ENCODE measurements at regions of chr19 and their contacts with region 1.

Region 1: GRCh38 chr19:23758187-23759074 is at the start of gene ZNF681:
- DNase-seq: peak; percentile 86 to 95 (median 90)
- H3K4me3 ChIP-seq: peak within 1 kb of the TSS; percentile 80 to 98
- H3K4me3 Mint-ChIP-seq: peak within 1 kb of the TSS; percentile 94 to 98 (median 96)
- H3K27ac ChIP-seq: peak within 1 kb of the TSS; percentile 93
- H3K27ac Mint-ChIP-seq: peak within 1 kb of the TSS; percentile 95 to 99 (median 98)
- H3K4me1 ChIP-seq: peaks cover 17% of the 10 kb centered on the region
- H3K4me1 Mint-ChIP-seq: peaks cover 17 to 47% (median 28%) of the 10 kb centered on the region in 4 donors
- H3K27me3 ChIP-seq: no peaks in the 10 kb centered on the region
- H3K27me3 Mint-ChIP-seq: no peaks in the 10 kb centered on the region
- total RNA-seq, gene ZNF681: 8.0 to 8.3 TPM

Region 2: DNA sequence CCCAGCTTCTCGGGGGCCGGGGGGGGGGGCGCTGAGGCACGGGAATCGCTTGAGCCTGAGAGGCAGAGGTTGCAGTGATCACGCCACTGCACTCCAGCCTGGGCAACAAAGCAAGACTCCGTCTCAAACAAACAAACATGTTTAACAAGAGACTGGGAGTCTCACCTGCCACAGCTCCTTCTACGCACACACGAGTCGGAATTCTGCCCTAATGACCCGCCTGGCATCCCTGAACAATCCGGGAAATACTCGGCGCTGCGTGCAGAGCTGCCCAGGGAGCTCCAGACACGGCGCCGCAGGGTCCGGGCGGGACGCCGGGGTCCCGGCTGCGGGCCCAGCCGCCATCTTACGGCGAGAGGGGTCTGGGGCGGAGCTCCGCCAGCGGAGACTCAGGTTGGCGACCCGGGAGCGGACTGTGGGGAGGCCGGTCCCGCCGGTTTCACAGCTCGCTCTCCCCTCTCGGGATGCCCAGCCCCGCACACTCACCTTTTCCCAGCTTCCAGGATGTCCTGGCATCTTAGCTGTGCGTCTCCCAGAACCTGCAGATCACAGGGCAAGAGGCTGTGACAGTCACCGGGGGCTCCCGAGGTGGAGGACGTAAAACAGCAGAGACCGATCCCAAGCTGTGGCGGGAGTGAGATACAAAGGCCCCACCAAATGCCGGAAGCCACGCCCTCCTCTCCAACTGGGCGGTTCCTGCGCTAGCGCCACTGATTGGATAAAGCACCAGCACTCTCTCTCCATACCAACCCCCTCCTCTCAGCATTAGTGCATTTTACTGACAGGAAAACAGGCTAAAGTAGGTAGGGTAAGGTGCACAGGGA is 484.6 kb before region 1 on chr19:
- CTCF ChIA-PET with region 1: no interaction called
- POLR2A ChIA-PET with region 1: interaction called, 16 read pairs
- intact Hi-C with region 1: loop called (anchors 1 kb)
- DNase-seq: peak; percentile 89 to 94 (median 90)
- H3K4me3 ChIP-seq: peak overlapping the region; percentile 94 to 99
- H3K4me3 Mint-ChIP-seq: peak overlapping the region; percentile 96 to 99 (median 98)
- H3K27ac ChIP-seq: peak overlapping the region; percentile 92
- H3K27ac Mint-ChIP-seq: peak overlapping the region; percentile 93 to 97 (median 97)
- H3K4me1 ChIP-seq: peaks cover 21% of the 10 kb centered on the region
- H3K4me1 Mint-ChIP-seq: peaks cover 21 to 55% (median 30%) of the 10 kb centered on the region in 4 donors
- H3K27me3 ChIP-seq: no peaks in the 10 kb centered on the region
- H3K27me3 Mint-ChIP-seq: no peaks in the 10 kb centered on the region

Region 3: GRCh38 chr19:23686621-23687423 is 71.6 kb before region 1 on chr19 and contains the start of gene ZNF675:
- CTCF ChIA-PET with region 1: interaction called, 5 read pairs
- POLR2A ChIA-PET with region 1: interaction called, 42 read pairs
- intact Hi-C with region 1: loop called (anchors 1 kb)
- DNase-seq: peak; percentile 87 to 93 (median 88)
- H3K4me3 ChIP-seq: peak within 1 kb of the TSS; percentile 64 to 100
- H3K4me3 Mint-ChIP-seq: peak within 1 kb of the TSS; percentile 99 to 100 (median 99)
- H3K27ac ChIP-seq: peak within 1 kb of the TSS; percentile 83
- H3K27ac Mint-ChIP-seq: peak within 1 kb of the TSS; percentile 96 to 99 (median 98)
- H3K4me1 ChIP-seq: peaks cover 32% of the 10 kb centered on the region
- H3K4me1 Mint-ChIP-seq: peaks cover 35 to 60% (median 48%) of the 10 kb centered on the region in 4 donors
- H3K27me3 ChIP-seq: no peaks in the 10 kb centered on the region
- H3K27me3 Mint-ChIP-seq: no peaks in the 10 kb centered on the region
- total RNA-seq, gene ZNF675: 34.3 to 36.9 TPM

Region 4: DNA sequence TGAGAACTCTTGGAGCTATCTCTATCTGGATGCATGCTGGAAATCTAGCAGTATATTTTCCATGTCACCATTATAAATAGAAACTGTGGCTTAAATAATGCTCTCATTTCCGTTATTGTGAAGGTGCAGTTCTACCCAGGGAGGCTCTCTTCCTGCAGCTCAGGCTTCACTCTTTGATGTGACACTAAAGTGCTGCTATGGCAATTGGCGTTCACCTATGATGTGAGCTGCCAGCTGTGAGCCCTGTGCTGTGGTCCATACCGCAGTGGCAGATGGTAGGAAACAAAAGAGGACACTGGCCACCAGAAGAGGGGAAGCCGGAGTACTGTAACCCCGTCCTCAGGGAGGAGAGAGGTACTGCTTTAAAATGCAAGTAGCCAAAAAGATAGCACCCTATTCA is 40.9 kb after region 1 on chr19:
- CTCF ChIA-PET with region 1: interaction called, 11 read pairs
- POLR2A ChIA-PET with region 1: interaction called, 20 read pairs
- intact Hi-C with region 1: loop called (anchors 2 kb)
- DNase-seq: peak; percentile 59 to 73 (median 65)
- H3K4me3 ChIP-seq: peak overlapping the region in 1 of 2 donors; percentile 45
- H3K4me3 Mint-ChIP-seq: peak overlapping the region; percentile 82 to 94 (median 88)
- H3K27ac ChIP-seq: peak overlapping the region; percentile 51
- H3K27ac Mint-ChIP-seq: peak overlapping the region; percentile 93 to 98 (median 96)
- H3K4me1 ChIP-seq: peaks cover 46% of the 10 kb centered on the region
- H3K4me1 Mint-ChIP-seq: peaks cover 26 to 52% (median 34%) of the 10 kb centered on the region in 4 donors
- H3K27me3 ChIP-seq: no peaks in the 10 kb centered on the region
- H3K27me3 Mint-ChIP-seq: no peaks in the 10 kb centered on the region

Region 5: GRCh38 chr19:23817519-23817918 is 59.1 kb after region 1 on chr19:
- CTCF ChIA-PET with region 1: interaction called, 6 read pairs
- POLR2A ChIA-PET with region 1: interaction called, 9 read pairs
- intact Hi-C with region 1: loop called (anchors 1 kb)
- DNase-seq: peak in 4 of 5 donors; percentile 17 to 37 (median 31)
- H3K4me3 ChIP-seq: no peak overlapping the region
- H3K4me3 Mint-ChIP-seq: no peak overlapping the region
- H3K27ac ChIP-seq: no peak overlapping the region
- H3K27ac Mint-ChIP-seq: peak overlapping the region in 2 of 7 donors; percentile 1 to 51
- H3K4me1 ChIP-seq: no peaks in the 10 kb centered on the region
- H3K4me1 Mint-ChIP-seq: peaks cover 0 to 3% (median 1%) of the 10 kb centered on the region in 4 donors
- H3K27me3 ChIP-seq: no peaks in the 10 kb centered on the region
- H3K27me3 Mint-ChIP-seq: no peaks in the 10 kb centered on the region

Region 6: GRCh38 chr19:23914402-23915301 is 156.2 kb after region 1 on chr19 and contains the start of gene ZNF726:
- CTCF ChIA-PET with region 1: no interaction called
- POLR2A ChIA-PET with region 1: interaction called, 11 read pairs
- intact Hi-C with region 1: loop called (anchors 2 kb)
- DNase-seq: peak; percentile 88 to 92 (median 89)
- H3K4me3 ChIP-seq: peak within 1 kb of the TSS; percentile 53 to 59
- H3K4me3 Mint-ChIP-seq: peak within 1 kb of the TSS; percentile 93 to 97 (median 95)
- H3K27ac ChIP-seq: peak within 1 kb of the TSS; percentile 53
- H3K27ac Mint-ChIP-seq: peak within 1 kb of the TSS; percentile 90 to 96 (median 91)
- H3K4me1 ChIP-seq: no peaks in the 10 kb centered on the region
- H3K4me1 Mint-ChIP-seq: peaks cover 6 to 24% (median 15%) of the 10 kb centered on the region in 4 donors
- H3K27me3 ChIP-seq: no peaks in the 10 kb centered on the region
- H3K27me3 Mint-ChIP-seq: no peaks in the 10 kb centered on the region
- total RNA-seq, gene ZNF726: 3.0 to 3.3 TPM

Measured in CD4-positive, alpha-beta memory T cell (primary cell).